OCI-LY7 (cell line): ENCODE measurements at regions of chr12 and their contacts with region 1.

Region 1: DNA sequence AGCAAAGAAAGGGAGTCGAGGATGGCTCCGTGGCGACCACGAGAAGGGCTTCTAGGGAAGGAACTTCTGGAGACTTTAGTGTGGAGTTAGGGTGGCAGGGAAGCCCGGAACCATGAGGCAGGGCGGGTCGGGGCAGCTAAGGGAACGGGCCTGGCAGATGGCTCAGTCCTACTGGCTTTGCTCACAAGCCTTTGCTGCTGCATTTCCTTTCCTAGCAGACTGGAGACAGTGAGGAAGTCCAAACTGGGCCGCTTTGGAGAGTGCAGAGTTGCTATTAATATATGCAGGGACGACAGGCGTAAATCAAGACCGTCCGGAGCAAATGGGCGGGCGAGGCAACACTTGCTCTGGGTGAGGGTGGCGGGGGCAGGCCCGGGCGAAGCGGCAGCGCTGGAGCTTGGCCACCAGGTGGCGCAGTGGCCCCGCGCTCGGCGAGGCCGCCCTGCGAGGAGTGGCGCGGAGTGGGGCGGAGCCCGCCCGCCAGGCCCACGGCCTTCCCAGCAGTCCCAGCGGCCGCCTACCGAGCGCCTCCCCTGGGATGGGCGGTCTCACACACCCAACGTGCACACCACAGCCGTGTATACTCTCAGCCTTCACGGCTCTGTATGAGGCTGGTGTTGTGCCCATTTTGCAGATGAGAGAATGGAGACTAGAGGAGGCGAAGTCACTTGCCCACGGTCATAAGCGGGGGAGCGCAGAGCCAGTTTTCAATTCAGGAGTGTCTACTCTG is 24.4 kb upstream of the LRTM2 start:
- DNase-seq: peak; percentile 93
- H3K4me3 ChIP-seq: peak overlapping the region; percentile 66
- H3K27ac ChIP-seq: no peak overlapping the region
- H3K4me1 ChIP-seq: peaks cover 31% of the 10 kb centered on the region
- CTCF ChIP-seq: peak; percentile 95

Region 2: GRCh38 chr12:1488908-1489381 is 307.0 kb before region 1 on chr12:
- CTCF ChIA-PET with region 1: no interaction called
- POLR2A ChIA-PET with region 1: no interaction called
- intact Hi-C with region 1: no loop called
- DNase-seq: no peak
- H3K4me3 ChIP-seq: no peak overlapping the region
- H3K27ac ChIP-seq: no peak overlapping the region
- H3K4me1 ChIP-seq: no peaks in the 10 kb centered on the region
- CTCF ChIP-seq: no peak

Region 3: GRCh38 chr12:1634590-1635191 is 161.3 kb before region 1 on chr12:
- CTCF ChIA-PET with region 1: interaction called, 10 read pairs
- POLR2A ChIA-PET with region 1: no interaction called
- intact Hi-C with region 1: loop called (anchors 1 kb)
- DNase-seq: peak; percentile 64
- H3K4me3 ChIP-seq: no peak overlapping the region
- H3K27ac ChIP-seq: no peak overlapping the region
- H3K4me1 ChIP-seq: peaks cover 7% of the 10 kb centered on the region
- CTCF ChIP-seq: peak; percentile 92

Region 4: DNA sequence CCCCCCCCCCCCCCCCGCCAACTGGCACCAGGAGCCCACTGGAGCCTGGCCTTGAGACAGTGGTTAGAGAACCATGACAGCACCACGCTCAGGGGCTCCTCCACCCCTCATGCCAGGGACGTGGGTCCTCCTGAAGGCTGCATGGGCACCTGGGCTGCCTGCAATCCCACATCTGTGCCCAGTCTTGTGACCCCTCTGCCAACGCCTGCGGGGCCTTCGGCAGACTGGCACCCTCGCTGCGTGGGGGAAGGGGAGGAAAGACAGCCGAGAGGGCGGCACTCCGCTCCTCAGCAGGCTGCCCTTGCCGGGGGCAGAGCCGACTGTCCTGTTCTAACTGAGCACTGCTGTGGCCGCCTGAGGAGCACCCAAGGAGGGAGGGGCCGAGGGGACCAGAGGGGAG is 30.5 kb after region 1 on chr12:
- CTCF ChIA-PET with region 1: interaction called, 10 read pairs
- POLR2A ChIA-PET with region 1: no interaction called
- intact Hi-C with region 1: no loop called
- DNase-seq: no peak
- H3K4me3 ChIP-seq: no peak overlapping the region
- H3K27ac ChIP-seq: no peak overlapping the region
- H3K4me1 ChIP-seq: no peaks in the 10 kb centered on the region
- CTCF ChIP-seq: no peak

Region 5: GRCh38 chr12:2034633-2035430 is 238.9 kb after region 1 on chr12:
- CTCF ChIA-PET with region 1: no interaction called
- POLR2A ChIA-PET with region 1: no interaction called
- intact Hi-C with region 1: loop called (anchors 2 kb)
- DNase-seq: peak; percentile 89
- H3K4me3 ChIP-seq: peak overlapping the region; percentile 58
- H3K27ac ChIP-seq: no peak overlapping the region
- H3K4me1 ChIP-seq: peaks cover 6% of the 10 kb centered on the region
- CTCF ChIP-seq: peak; percentile 93

Region 6: DNA sequence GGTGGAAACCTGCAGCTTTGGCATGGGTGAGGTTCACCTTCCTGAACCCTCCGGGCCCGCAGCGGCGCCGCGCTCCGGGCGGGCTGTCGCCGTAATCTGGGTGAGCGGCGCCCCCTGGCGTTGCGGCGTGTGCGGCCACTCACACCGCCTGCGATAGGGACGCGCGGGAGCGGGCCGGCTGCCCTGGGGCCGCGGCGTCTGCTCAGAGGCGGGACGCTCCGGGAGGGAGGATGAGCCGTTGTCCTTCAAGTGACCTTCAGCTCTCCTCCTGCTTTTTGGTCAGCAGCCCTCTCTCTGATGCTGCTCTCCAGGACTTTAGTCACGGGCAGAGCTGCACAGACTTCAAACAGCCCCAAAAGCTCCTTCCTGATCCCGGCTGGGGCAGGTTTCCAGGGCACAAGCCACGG is 787.1 kb after region 1 on chr12:
- CTCF ChIA-PET with region 1: no interaction called
- POLR2A ChIA-PET with region 1: no interaction called
- intact Hi-C with region 1: loop called (anchors 2 kb)
- DNase-seq: peak; percentile 48
- H3K4me3 ChIP-seq: no peak overlapping the region
- H3K27ac ChIP-seq: no peak overlapping the region
- H3K4me1 ChIP-seq: no peaks in the 10 kb centered on the region
- CTCF ChIP-seq: peak; percentile 72